ENCODE measurements at regions of chr17 and their contacts with region 1.

Region 1: DNA sequence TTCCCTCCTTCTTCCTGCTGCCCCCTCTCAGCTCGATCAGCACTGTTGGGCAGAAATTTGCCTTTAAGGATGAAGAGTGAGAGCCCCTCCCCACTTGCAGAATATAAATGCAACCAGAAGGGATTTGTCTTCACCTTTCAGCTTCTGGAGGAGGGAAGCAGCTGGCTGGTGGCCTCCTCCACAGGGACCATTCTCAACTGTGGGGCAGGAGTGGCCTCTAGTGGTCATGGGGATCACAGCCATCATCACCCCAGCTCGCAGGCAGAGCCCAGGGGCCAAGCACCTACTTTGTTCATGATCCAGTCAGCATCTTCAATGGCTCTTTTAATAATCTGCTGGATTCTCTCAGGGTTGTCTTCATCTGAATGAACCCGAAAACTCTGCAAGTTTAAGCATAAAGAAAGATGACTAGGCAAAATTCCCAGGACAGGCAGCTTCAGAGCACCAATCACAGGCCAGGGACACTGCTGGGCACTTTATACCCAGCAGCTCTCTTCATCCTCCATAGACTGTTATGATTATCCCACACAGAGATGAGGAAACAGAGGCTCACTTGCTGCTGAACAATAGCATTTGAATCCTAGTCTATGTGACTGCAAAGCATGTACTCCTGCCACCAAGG is 13.1 kb downstream of the LYRM9 start:
- DNase-seq: peak; percentile 79
- H3K4me3 Mint-ChIP-seq: no peak overlapping the region
- H3K27ac Mint-ChIP-seq: peak overlapping the region; percentile 65
- H3K4me1 Mint-ChIP-seq: peaks cover 33% of the 10 kb centered on the region
- H3K27me3 Mint-ChIP-seq: no peaks in the 10 kb centered on the region

Region 2: GRCh38 chr17:27654654-27655524 is 225.2 kb before region 1 on chr17:
- CTCF ChIA-PET with region 1: interaction called, 17 read pairs
- POLR2A ChIA-PET with region 1: no interaction called
- DNase-seq: peak; percentile 68
- H3K4me3 Mint-ChIP-seq: no peak overlapping the region
- H3K27ac Mint-ChIP-seq: peak overlapping the region; percentile 33
- H3K4me1 Mint-ChIP-seq: peaks cover 9% of the 10 kb centered on the region
- H3K27me3 Mint-ChIP-seq: no peaks in the 10 kb centered on the region

Region 3: GRCh38 chr17:27701963-27702362 is 178.1 kb before region 1 on chr17:
- CTCF ChIA-PET with region 1: no interaction called
- POLR2A ChIA-PET with region 1: no interaction called
- DNase-seq: no peak
- H3K4me3 Mint-ChIP-seq: no peak overlapping the region
- H3K27ac Mint-ChIP-seq: no peak overlapping the region
- H3K4me1 Mint-ChIP-seq: no peaks in the 10 kb centered on the region
- H3K27me3 Mint-ChIP-seq: peaks cover 27% of the 10 kb centered on the region

Region 4: DNA sequence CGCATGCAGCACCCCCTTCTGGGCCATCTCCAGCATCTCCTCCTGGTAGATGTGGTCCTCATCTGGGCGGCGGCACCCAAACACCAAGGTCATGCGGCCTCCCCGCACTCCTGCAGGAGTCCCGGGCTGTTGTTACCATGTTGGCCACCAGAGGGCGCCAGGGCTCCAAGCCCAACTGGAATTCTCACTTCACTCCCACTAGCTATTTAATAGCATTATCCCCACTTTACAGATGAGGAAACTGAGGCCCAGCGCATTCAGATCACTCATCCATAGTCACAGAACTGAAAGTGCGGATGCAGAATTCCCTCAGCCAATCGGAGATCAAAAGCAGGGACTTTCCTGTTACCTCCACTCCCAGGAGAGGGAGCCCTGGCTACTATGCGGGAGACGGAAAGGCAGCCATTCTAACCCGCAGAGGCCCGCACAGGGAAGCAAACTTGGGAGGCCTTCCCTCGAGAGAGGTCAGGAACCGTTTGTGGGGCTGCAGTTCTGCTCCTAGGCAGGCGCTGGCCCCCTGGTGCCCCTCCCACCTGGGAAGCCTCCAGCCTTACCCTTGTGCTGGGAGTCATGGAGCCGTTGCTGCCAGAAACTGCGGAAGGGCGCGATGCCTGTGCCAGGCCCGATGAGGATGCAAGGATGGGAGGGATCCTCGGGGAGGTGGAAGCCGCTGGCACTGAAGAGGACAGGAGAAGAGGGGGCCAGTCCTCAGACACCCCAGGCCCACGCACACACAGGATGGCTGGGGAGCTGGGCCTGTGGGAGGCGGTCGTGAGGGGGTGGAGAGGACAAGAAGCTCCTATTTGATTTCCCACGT is 119.8 kb before region 1 on chr17:
- CTCF ChIA-PET with region 1: interaction called, 14 read pairs
- POLR2A ChIA-PET with region 1: no interaction called
- DNase-seq: peak; percentile 73
- H3K4me3 Mint-ChIP-seq: no peak overlapping the region
- H3K27ac Mint-ChIP-seq: no peak overlapping the region
- H3K4me1 Mint-ChIP-seq: no peaks in the 10 kb centered on the region
- H3K27me3 Mint-ChIP-seq: no peaks in the 10 kb centered on the region

Region 5: DNA sequence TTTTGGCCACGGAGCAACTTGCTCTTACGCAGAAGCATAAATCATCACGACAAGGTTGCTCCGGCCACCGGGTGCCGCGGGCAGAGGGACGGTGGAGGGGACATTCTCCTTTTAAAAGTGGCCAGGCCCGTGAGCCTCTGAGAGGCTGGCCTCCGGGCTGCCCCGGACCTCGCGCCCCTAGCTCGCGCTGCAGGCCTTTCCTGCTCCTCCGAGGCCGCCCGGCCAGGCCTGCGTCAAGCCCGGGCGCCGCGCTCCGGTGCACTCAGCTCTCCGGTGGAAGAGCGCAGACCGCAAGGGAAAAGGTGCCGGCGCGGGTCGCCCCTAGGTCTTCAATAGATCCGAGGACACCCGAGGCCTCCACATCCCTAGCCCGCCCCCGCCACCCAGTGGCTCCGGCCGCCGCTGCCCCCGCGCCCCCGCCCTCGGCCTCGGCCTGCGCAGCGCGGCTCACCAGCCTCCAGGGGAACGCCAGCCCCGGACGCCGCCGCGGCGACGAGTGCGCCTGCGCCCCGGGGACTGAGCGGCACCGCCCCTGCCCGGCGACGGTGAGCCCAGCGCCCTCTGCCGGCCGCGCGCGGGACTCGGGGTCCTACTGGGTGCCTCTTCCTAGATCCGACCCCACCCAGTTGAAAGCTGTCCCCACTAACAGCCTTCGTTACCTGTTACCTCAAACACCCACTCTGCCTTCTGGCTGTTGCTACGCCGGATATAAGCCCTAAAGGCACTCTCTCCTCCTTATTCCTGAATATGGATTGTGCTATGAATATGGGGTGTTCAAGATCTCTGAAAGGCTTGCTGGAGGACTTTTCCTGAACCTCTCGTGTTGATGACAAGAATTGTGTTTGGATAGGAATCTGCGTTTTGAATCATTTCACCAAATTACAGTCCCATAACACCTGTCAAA is 13.0 kb after region 1 on chr17 and contains the start of gene LYRM9:
- CTCF ChIA-PET with region 1: interaction called, 42 read pairs
- POLR2A ChIA-PET with region 1: no interaction called
- DNase-seq: peak; percentile 90
- H3K4me3 Mint-ChIP-seq: peak within 1 kb of the TSS; percentile 72
- H3K27ac Mint-ChIP-seq: peak within 1 kb of the TSS; percentile 81
- H3K4me1 Mint-ChIP-seq: peaks cover 22% of the 10 kb centered on the region
- H3K27me3 Mint-ChIP-seq: peaks cover 27% of the 10 kb centered on the region
- total RNA-seq, gene LYRM9: 5.9 to 6.1 TPM

Measured in activated CD4-positive, alpha-beta T cell treated with anti-CD3 and anti-CD28 coated beads, Interleukin-2, amount 10 ng/mL, durations not matched to agents 7 days and 5 days (primary cell).